GM10248 (cell line): ENCODE measurements at regions of chr1 and their contacts with region 1.

Region 1: GRCh38 chr1:241611063-241611462 is 29.1 kb downstream of the CHML start:
- DNase-seq: peak; percentile 43
- CTCF ChIP-seq: peak; percentile 54

Region 2: GRCh38 chr1:241525026-241525425 is 86.0 kb before region 1 on chr1:
- CTCF ChIA-PET with region 1: interaction called, 11 read pairs
- POLR2A ChIA-PET with region 1: no interaction called
- DNase-seq: no peak
- CTCF ChIP-seq: no peak

Region 3: DNA sequence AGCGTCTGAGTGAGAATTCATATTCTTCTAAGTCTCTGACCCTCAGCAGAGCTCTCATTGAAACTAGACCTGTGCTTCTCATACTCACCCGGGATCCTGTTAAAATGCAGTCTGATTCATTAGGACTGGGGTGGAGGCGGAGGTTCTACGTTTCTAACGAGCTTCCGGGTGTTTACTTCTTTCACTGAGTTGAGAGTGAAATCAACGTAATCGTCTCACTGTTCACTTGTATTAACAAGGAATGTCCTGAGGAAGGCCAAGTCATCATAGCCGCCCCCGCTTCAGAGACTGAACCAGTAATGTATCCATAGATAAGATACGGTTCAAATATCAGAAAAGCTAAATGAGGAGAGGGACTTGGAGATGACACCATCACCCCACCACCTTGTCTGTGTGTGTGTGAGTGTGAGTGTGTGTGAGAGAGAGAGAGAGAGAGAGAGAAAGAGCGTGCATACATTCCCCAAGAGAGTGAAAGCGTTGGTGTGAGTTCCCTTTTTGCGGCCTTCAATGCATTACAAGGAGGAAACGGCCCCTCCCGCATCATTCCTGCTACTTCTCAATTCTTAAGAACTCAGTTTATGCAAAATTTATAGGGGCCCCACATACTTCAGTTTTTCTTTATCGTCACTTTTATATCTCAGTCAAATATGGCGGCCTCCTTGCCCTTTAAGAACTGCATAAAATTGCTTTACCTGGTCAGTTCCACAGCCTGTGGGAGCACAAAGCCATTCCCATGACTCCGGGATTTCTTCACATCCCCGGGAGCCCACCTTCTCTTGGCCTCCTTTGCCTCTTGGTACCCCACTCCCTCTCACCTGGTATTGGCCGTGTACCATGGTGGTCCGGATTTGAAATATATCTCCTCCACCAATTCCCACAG is 59.1 kb before region 1 on chr1:
- CTCF ChIA-PET with region 1: interaction called, 14 read pairs
- POLR2A ChIA-PET with region 1: no interaction called
- DNase-seq: peak; percentile 51
- CTCF ChIP-seq: no peak

Region 4: GRCh38 chr1:241592273-241592958 is 18.6 kb before region 1 on chr1:
- CTCF ChIA-PET with region 1: interaction called, 37 read pairs
- POLR2A ChIA-PET with region 1: no interaction called
- DNase-seq: no peak
- CTCF ChIP-seq: no peak

Region 5: GRCh38 chr1:241627453-241628259 is 16.6 kb after region 1 on chr1:
- CTCF ChIA-PET with region 1: interaction called, 62 read pairs
- POLR2A ChIA-PET with region 1: no interaction called
- DNase-seq: peak; percentile 34
- CTCF ChIP-seq: peak; percentile 59

Region 6: DNA sequence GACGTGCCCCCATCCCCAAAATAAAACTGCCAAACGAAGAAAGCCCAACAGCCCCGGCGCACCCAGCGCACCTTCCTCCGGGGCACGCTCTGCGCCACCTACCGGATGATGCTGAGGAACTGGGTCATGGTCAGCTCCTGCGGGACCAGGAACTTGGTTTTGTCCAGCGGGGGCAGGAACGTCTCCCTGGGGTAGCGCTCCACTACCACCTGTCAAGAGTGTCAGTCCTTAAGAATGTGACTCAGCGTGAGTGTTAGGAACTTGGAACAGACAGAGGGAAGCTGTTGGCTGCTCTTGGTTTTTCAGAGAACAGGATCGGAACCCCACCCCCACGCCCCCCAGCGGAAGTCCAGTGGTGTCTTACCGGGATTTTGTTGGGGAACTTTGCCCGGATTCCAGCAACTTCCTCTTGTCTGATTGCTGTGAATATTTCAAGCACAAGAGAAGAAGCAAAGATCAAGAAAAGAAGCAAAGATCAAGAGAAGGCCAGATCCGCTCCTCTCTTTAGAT is 387.4 kb after region 1 on chr1:
- CTCF ChIA-PET with region 1: interaction called, 31 read pairs
- POLR2A ChIA-PET with region 1: no interaction called
- DNase-seq: peak; percentile 61
- CTCF ChIP-seq: peak; percentile 80